Activated CD4-positive, alpha-beta T cell treated with anti-CD3 and anti-CD28 coated beads for 36 hours (primary cell): ENCODE measurements at regions of chr22 and their contacts with region 1.

Region 1: GRCh38 chr22:50525390-50526068 is at the start of gene SCO2:
- DNase-seq: peak; percentile 99
- ATAC-seq: peak; percentile 56
- H3K4me3 Mint-ChIP-seq: peak within 1 kb of the TSS; percentile 77
- H3K27ac Mint-ChIP-seq: peak within 1 kb of the TSS; percentile 87
- H3K4me1 Mint-ChIP-seq: peaks cover 34% of the 10 kb centered on the region
- H3K27me3 Mint-ChIP-seq: no peaks in the 10 kb centered on the region
- total RNA-seq, gene SCO2: 2.4 to 5.6 TPM

Region 2: DNA sequence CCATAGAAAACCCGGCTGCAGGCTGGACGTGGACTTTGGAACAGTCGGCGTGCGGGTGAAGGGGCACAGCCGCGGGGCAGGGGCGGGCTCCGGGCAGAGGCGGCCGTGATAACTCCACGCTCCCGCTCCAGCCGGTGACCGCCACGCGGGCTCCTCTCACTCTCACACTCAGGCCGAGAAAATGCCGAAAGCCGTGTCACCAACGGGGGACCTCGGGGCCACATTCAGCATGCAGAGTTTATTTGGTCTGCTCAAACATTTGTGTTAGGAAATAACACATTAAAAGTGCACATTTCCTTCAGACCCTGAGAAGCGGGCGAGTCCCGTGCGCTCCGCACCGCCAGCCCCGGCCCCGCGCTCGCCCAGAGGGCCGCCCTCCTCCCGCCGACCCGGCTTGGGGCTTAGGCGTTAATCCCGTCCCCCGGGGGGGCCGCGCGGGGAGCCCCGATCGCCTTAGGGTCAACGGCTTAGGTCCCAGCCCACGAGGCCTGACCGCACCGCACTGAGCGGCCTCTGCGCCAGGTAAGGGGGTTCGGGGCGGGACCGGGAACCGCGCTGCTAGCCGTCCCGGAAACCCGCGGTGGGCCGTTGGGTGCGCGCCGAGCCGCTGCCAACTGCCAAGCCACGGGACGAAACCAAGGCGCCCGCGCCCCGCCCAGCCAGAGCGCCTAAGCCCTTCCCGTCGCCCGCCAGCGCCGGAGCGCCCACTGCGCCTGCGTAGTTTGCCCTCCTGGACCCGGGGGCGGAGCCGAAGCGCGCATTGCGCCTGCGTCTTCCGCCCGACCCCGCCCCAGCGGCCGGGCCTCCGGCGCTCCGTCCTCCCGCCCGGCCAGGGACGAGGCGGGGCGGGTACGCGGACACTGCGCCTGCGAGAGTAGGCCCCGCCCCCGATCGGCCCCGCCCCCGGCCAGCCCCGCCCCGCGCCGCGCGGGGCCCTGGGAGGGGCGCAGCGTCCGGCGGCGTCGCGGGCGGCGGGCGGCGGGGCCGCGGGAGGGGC is 672.3 kb before region 1 on chr22 and contains the start of gene ZBED4:
- CTCF ChIA-PET with region 1: no interaction called
- POLR2A ChIA-PET with region 1: no interaction called
- intact Hi-C with region 1: loop called in 1 of 2 experiments (anchors 5 kb)
- DNase-seq: peak; percentile 99
- ATAC-seq: peak; percentile 88
- H3K4me3 Mint-ChIP-seq: peak within 1 kb of the TSS; percentile 96
- H3K27ac Mint-ChIP-seq: peak within 1 kb of the TSS; percentile 87
- H3K4me1 Mint-ChIP-seq: peaks cover 36% of the 10 kb centered on the region
- H3K27me3 Mint-ChIP-seq: peaks cover 8% of the 10 kb centered on the region
- total RNA-seq, gene ZBED4: 17.3 to 17.4 TPM

Region 3: GRCh38 chr22:50261615-50262459 is 263.7 kb before region 1 on chr22 and contains the start of gene MAPK12:
- CTCF ChIA-PET with region 1: no interaction called
- POLR2A ChIA-PET with region 1: no interaction called
- intact Hi-C with region 1: no loop called
- DNase-seq: no peak
- ATAC-seq: no peak
- H3K4me3 Mint-ChIP-seq: peak within 1 kb of the TSS; percentile 54
- H3K27ac Mint-ChIP-seq: no peak within 1 kb of the TSS
- H3K4me1 Mint-ChIP-seq: peaks cover 5% of the 10 kb centered on the region
- H3K27me3 Mint-ChIP-seq: peaks cover 14% of the 10 kb centered on the region
- total RNA-seq, gene MAPK12: 5.4 to 8.1 TPM

Region 4: GRCh38 chr22:50423042-50423815 is 102.3 kb before region 1 on chr22:
- CTCF ChIA-PET with region 1: no interaction called
- POLR2A ChIA-PET with region 1: no interaction called
- intact Hi-C with region 1: no loop called
- DNase-seq: no peak
- ATAC-seq: no peak
- H3K4me3 Mint-ChIP-seq: no peak overlapping the region
- H3K27ac Mint-ChIP-seq: no peak overlapping the region
- H3K4me1 Mint-ChIP-seq: peaks cover 6% of the 10 kb centered on the region
- H3K27me3 Mint-ChIP-seq: no peaks in the 10 kb centered on the region

Region 5: GRCh38 chr22:50469377-50470305 is 55.9 kb before region 1 on chr22:
- CTCF ChIA-PET with region 1: interaction called, 14 read pairs
- POLR2A ChIA-PET with region 1: interaction called, 6 read pairs
- intact Hi-C with region 1: no loop called
- DNase-seq: peak; percentile 97
- ATAC-seq: peak; percentile 84
- H3K4me3 Mint-ChIP-seq: peak overlapping the region; percentile 59
- H3K27ac Mint-ChIP-seq: peak overlapping the region; percentile 95
- H3K4me1 Mint-ChIP-seq: peaks cover 53% of the 10 kb centered on the region
- H3K27me3 Mint-ChIP-seq: no peaks in the 10 kb centered on the region

Region 6: GRCh38 chr22:50481440-50482106 is 44.0 kb before region 1 on chr22 and contains the start of gene ADM2:
- CTCF ChIA-PET with region 1: no interaction called
- POLR2A ChIA-PET with region 1: no interaction called
- intact Hi-C with region 1: no loop called
- DNase-seq: peak; percentile 82
- ATAC-seq: peak; percentile 87
- H3K4me3 Mint-ChIP-seq: peak within 1 kb of the TSS; percentile 74
- H3K27ac Mint-ChIP-seq: no peak within 1 kb of the TSS
- H3K4me1 Mint-ChIP-seq: no peaks in the 10 kb centered on the region
- H3K27me3 Mint-ChIP-seq: peaks cover 8% of the 10 kb centered on the region
- total RNA-seq, gene ADM2: 7.5 to 7.9 TPM

Region 7: DNA sequence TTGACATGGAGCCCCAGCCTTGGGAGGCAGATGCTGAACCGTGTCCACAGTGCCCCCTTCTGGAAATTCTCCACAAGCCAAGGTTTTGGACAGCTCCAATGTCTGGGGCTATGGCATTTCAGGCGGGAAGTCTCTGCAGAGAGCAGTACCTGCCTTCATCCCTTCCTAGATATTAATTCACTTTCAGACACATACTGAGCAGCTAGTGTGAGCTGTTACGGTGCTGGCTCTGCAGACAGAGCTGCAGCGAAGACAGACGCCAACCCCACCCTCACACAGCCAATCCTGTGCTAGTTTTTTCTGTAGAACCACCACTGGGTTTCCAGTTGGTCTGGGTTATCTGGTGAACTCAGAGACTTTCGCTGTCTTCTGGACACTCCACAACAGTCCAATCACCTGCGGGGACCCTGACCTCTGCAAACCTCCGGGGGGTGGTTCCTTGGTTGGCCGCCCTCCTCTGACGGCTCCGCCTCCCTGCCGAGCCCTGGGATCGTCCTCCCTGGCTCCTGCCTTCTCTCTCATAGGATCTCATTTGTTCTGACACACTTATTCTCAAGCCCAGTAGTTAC is 27.1 kb before region 1 on chr22:
- CTCF ChIA-PET with region 1: interaction called, 11 read pairs
- POLR2A ChIA-PET with region 1: interaction called, 4 read pairs
- intact Hi-C with region 1: no loop called
- DNase-seq: peak; percentile 78
- ATAC-seq: peak; percentile 96
- H3K4me3 Mint-ChIP-seq: no peak overlapping the region
- H3K27ac Mint-ChIP-seq: no peak overlapping the region
- H3K4me1 Mint-ChIP-seq: peaks cover 7% of the 10 kb centered on the region
- H3K27me3 Mint-ChIP-seq: no peaks in the 10 kb centered on the region

Region 8: GRCh38 chr22:50562523-50563412 is 37.2 kb after region 1 on chr22 and contains the start of gene SYCE3:
- CTCF ChIA-PET with region 1: interaction called, 43 read pairs
- POLR2A ChIA-PET with region 1: interaction called, 8 read pairs
- intact Hi-C with region 1: loop called (anchors 1 to 2 kb)
- DNase-seq: peak; percentile 99
- ATAC-seq: peak; percentile 96
- H3K4me3 Mint-ChIP-seq: peak within 1 kb of the TSS; percentile 83
- H3K27ac Mint-ChIP-seq: peak within 1 kb of the TSS; percentile 84
- H3K4me1 Mint-ChIP-seq: peaks cover 19% of the 10 kb centered on the region
- H3K27me3 Mint-ChIP-seq: no peaks in the 10 kb centered on the region
- total RNA-seq, gene SYCE3: 3.8 TPM

Region 9: DNA sequence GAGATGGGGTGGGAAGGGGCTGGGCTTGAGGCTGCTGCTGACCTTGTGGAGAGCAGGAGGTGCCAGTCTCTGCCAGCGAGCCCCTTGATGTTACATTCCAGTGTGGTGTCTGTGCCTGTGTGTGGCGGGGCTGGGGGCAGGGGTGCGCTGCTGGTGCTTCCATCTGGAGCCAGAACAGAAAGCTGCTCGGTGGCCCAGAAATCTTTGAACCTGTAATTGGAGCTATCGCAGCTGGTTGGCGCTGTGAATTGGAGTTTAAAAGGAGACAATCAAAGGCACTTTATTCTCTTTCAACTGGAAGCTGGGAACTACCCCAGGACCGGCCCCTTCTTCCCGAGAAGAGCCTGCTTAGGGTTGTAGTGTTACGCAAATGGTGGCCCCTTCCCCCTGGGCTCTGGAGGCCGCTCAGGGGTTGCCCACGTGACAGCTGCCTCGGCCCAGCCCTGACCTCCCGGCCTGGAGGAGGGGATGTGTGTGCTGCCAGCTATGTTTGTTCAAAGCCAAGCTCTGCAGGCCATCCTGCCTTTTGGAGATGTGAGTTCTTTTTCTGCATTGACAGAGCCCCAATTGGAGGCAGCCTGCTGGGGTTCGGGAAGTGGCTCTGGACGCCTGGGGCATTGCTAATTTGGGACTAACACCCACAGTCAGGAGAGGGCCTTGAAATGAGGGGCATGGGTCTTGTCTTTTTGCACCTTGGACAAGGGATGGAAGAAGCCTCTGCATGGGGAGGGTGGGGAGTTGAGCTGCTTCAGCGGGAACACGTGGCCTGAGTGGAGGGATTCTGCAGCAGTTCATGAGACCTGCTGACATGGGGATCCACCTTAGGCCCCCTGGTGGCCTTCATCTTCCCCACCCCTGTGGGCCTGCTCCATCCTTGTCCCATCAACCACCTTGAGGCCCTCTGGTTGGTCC is 116.4 kb after region 1 on chr22:
- CTCF ChIA-PET with region 1: no interaction called
- POLR2A ChIA-PET with region 1: no interaction called
- intact Hi-C with region 1: no loop called
- DNase-seq: no peak
- ATAC-seq: no peak
- H3K4me3 Mint-ChIP-seq: no peak overlapping the region
- H3K27ac Mint-ChIP-seq: no peak overlapping the region
- H3K4me1 Mint-ChIP-seq: no peaks in the 10 kb centered on the region
- H3K27me3 Mint-ChIP-seq: peaks cover 8% of the 10 kb centered on the region